Cardiac septum (tissue), 1 donor: ENCODE measurements at regions of chr12 and their contacts with region 1.

Region 1: DNA sequence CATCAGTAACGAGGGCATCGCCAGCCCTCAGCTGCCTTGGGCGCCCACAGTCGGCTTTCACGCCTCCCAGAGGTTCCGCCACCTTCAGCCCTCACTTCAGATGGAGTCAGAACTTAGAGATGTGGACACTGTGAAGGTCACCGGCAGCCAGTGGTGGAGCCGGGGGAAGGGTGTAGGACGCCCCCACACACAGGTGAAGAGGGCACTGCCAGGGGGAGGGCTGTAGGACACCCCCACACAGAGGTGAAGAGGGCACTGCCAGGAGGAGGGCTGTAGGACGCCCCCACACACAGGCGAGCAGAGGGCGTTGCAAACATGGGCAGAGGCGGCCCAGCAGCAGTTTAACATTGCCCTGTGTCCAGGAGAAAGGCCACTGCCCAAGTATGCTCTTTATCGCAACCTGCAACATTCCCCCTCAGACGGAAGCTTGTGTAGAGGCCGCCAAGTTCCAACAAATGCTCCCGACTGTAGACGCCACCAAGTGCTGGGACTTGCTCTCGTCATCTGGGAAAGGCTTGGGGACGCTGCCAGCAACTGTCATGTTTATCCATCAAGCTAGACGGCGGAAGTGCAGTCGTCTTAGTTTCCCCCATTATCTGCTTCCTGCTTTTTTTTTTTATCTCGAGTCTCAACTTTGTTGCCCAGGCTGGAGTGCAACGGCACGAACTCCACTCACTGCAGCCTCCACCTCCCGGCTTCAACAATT is 4.9 kb upstream of the ANKLE2 start:
- DNase-seq: peak; percentile 87

Region 2: DNA sequence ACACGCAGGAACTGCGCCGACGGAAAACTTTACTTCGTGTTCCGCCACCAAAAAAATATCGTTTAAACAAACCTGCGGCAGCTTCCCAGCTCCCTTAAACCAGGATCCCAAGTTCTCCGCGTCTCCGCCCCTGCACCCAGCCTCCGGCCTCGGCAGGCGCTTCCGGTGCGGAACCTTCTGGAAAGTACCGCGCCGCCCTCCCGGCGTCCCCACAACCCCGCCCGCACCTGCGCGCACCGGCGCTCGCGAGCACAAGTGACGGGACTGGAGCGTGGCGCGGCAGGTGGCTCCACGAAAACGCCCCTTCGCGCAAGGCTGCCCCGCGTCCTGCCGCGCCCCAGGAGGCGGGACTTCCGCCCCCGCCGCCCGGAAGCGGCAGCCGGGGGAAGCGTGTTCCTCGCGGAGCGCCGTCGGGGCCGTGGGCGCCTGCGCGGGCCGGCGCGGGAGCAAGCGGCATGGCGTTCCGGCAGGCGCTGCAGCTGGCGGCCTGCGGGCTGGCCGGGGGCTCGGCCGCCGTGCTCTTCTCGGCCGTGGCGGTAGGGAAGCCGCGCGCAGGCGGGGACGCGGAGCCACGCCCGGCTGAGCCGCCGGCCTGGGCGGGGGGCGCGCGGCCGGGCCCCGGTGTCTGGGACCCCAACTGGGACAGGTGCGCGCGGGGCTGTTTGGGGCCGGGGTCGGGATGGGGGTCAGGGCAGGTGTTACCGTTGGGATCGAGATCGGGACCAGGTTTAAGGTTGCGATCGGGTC is 55.9 kb before region 1 on chr12 and contains the start of gene PGAM5:
- intact Hi-C with region 1: no loop called
- DNase-seq: peak; percentile 90
- total RNA-seq, gene PGAM5: 26.1 TPM

Region 3: DNA sequence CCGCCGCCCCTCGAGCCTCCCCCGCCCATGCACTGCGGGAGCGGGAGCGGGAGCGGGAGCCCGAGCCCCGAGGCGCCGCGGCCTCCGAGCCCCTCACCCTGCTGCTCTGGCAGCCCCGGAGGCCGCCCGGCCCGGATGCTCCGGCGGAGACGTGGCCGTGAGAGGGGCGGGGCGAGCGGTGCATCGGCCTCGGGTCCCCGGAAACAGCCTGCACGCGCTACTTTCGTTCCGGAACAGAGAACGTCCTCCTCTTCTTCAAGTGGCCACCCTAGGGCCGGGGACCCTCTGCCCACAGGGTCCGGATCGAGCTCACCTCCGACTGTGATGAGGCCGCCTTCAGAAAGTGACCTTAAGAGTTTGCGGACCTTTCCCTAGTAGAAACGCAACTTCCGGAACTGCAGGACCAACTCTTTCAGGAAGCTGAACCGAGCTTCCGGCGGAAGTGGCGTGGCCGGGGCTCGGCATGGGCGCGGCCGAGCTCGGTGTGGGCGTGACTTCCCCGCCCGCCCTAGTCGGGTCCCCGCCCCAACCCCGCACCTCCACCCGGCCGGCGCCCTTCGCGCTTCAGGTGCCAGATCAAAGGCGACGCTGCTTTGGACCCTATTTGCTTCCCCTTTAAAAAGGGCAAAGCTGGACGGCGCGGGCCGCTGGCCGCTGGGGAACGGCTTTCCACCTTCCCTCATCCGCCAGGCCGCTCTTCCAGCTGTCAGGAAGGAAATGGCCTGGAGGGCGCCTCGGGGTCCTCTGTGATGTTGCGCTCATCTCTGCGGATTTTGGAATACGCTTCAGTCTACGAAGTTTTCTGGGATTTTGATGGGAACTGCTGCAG is 62.4 kb after region 1 on chr12 and contains the start of gene GOLGA3:
- intact Hi-C with region 1: loop called (anchors 5 kb)
- DNase-seq: peak; percentile 96
- total RNA-seq, gene GOLGA3: 50.1 TPM

Region 4: DNA sequence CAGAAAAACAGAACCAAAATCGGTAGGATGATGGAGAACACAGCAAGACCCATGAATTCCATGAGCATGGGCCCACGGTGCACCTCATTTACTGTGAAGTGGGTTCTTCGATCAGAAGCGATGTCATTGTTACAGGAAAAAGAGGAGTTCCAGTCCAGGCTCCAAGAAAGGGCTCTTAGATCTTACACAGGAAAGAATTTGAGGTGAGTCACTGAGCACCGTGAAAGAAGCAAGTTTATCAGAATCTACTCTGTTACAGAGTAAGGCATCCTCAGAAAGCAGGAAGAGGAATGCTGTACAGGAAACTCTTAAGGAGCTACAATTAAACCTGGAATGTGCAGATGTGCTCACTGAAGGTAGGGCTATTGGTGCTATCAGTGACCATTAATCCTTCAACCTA is 132.5 kb after region 1 on chr12:
- intact Hi-C with region 1: no loop called
- DNase-seq: no peak

Region 5: DNA sequence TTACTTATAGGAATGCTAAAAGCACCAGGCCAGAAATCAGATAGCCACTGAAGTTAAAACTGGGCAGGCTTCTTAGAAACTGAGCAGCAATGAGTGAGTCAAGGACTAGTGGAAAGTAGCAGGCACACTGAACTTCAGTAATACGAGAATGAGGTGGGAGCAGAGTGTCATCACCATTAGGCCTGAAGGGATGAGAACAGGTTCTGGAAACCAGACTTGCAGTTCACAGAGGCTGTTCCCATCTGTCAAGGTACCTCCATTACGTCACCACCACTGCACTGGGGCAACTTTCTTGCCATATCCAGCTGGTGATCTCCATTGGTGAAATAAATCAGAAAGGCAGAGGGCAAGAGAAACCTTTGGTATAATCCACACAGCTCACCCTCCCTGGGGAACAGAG is 379.4 kb after region 1 on chr12:
- intact Hi-C with region 1: no loop called
- DNase-seq: no peak